IMR-90 (cell line): ENCODE measurements at regions of chr3 and their contacts with region 1.

Region 1: DNA sequence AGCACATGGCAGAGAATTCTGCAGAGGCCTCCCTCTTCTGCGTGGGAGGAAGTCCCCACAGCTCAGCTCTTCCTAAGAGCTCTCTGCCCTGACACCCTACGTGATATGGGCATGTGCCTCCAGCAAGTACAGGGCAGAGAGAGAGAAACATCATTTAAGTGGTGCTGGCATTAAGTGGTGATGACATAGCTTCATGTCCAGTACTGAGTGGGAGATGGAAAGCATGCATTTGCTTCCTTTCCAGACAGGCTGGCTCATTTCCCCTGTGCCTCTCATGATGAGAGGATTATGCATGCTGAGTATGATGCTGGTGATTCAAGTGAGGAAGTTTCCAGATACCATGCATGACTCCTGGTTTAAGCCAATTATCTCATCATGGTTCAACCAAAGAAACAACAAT is 26.9 kb downstream of the BFSP2 start:
- DNase-seq: peak; percentile 86
- ATAC-seq: peak; percentile 61
- H3K4me3 ChIP-seq: no peak overlapping the region
- H3K27ac ChIP-seq: no peak overlapping the region
- H3K4me1 ChIP-seq: peaks cover 2% of the 10 kb centered on the region; the same call in 1 of the 2 replicates
- H3K27me3 ChIP-seq: peaks cover 3% of the 10 kb centered on the region
- CTCF ChIP-seq: no peak
- POLR2A ChIP-seq: no peak
- RAD21 ChIP-seq: no peak

Region 2: GRCh38 chr3:133040696-133041523 is 385.8 kb before region 1 on chr3:
- CTCF ChIA-PET with region 1: interaction called, 6 read pairs
- POLR2A ChIA-PET with region 1: no interaction called
- dilution Hi-C with region 1: no loop called
- in situ Hi-C with region 1: loop called (anchors 10 kb)
- intact Hi-C with region 1: loop called (anchors 1 kb)
- DNase-seq: peak; percentile 71
- ATAC-seq: peak; percentile 92
- H3K4me3 ChIP-seq: no peak overlapping the region
- H3K27ac ChIP-seq: no peak overlapping the region
- H3K4me1 ChIP-seq: no peaks in the 10 kb centered on the region
- H3K27me3 ChIP-seq: peaks cover 21% of the 10 kb centered on the region
- CTCF ChIP-seq: peak; percentile 91
- POLR2A ChIP-seq: no peak
- RAD21 ChIP-seq: peak; percentile 94

Region 3: GRCh38 chr3:133400006-133400515 is 26.7 kb before region 1 on chr3 and contains the start of gene BFSP2:
- CTCF ChIA-PET with region 1: interaction called, 12 read pairs
- POLR2A ChIA-PET with region 1: no interaction called
- dilution Hi-C with region 1: no loop called
- in situ Hi-C with region 1: no loop called
- intact Hi-C with region 1: no loop called
- DNase-seq: no peak
- ATAC-seq: no peak
- H3K4me3 ChIP-seq: no peak within 1 kb of the TSS
- H3K27ac ChIP-seq: no peak within 1 kb of the TSS
- H3K4me1 ChIP-seq: peaks cover 13% of the 10 kb centered on the region
- H3K27me3 ChIP-seq: no peaks in the 10 kb centered on the region
- CTCF ChIP-seq: no peak
- POLR2A ChIP-seq: no peak
- RAD21 ChIP-seq: no peak
- total RNA-seq, gene BFSP2: not detected in 2 replicates